Caco-2 (cell line): ENCODE measurements at regions of chr6 and their contacts with region 1.

Region 1: DNA sequence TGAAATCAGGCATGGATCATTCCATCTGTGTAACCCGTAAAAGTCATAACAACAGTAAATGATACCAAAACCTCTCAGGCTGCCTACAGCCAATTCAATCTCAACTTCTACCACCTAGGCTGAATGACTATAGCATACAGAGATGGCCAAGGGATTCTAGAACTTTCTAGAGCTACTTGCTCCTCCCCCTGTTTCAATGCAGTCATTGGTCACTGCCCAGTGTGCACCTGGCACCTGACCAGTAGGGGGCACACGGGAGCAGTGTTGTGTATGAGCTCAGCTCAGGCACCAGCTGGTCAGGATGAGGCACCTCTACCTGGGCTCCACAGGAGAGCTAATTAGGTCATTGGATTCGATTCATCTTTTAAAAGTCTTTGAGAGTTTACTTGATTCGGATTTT is 86.2 kb downstream of the PLEKHG1 start:
- DNase-seq: peak; percentile 77 to 85
- H3K4me3 ChIP-seq: no peak overlapping the region
- H3K4me3 Mint-ChIP-seq: peak overlapping the region; percentile 75
- H3K27ac Mint-ChIP-seq: peak overlapping the region; percentile 79
- H3K4me1 ChIP-seq: peaks cover 31% of the 10 kb centered on the region
- H3K4me1 Mint-ChIP-seq: peaks cover 20% of the 10 kb centered on the region
- H3K27me3 ChIP-seq: no peaks in the 10 kb centered on the region
- H3K27me3 Mint-ChIP-seq: no peaks in the 10 kb centered on the region
- CTCF ChIP-seq: peak; percentile 68 to 87

Region 2: DNA sequence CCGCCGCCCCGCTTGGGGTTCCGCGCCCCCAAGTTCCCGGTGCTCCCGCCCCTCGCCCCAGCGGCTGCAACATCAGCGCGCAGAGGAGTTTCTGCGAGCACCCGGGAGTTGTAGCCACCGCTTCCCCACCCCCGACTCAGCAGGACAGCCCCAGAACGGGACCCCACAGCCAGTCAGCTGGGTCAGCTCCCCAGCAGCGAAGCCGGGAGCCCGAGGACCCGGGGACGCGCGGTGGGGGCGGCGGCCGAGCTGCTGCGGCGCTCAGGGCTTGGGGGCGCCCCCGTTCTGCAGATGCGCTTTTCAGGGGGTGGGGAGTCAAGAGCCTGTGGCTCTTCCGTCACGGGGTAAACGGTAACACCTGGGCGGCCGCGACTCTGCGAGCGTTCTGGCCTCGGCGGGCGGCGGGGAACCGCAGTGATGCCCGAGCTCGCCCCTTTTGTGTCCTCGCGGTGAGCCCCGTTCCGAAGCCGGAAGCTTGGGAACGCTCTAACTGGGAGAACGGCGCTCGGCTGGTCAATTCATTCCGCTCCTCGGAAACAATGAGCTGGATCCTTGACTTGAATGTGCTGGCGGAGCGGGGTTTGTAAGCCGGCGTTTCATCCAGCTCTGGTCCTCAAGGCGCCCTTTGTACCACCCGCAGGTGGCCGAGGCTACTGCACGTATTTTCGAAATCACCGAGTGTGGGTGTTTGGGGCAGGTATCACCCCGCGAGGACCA is 85.4 kb before region 1 on chr6:
- CTCF ChIA-PET with region 1: interaction called, 6 read pairs
- POLR2A ChIA-PET with region 1: no interaction called
- intact Hi-C with region 1: loop called (anchors 1 kb)
- DNase-seq: peak; percentile 84 to 85
- H3K4me3 ChIP-seq: peak overlapping the region; percentile 61
- H3K4me3 Mint-ChIP-seq: peak overlapping the region; percentile 88
- H3K27ac Mint-ChIP-seq: peak overlapping the region; percentile 64
- H3K4me1 ChIP-seq: peaks cover 11% of the 10 kb centered on the region; the same call in 1 of the 2 replicates
- H3K4me1 Mint-ChIP-seq: peaks cover 18% of the 10 kb centered on the region
- H3K27me3 ChIP-seq: no peaks in the 10 kb centered on the region
- H3K27me3 Mint-ChIP-seq: no peaks in the 10 kb centered on the region
- CTCF ChIP-seq: peak; percentile 68 to 73

Region 3: GRCh38 chr6:150667977-150668716 is 17.7 kb before region 1 on chr6:
- CTCF ChIA-PET with region 1: interaction called, 15 read pairs
- POLR2A ChIA-PET with region 1: interaction called, 5 read pairs
- intact Hi-C with region 1: loop called (anchors 1 kb)
- DNase-seq: peak; percentile 87 to 88
- H3K4me3 ChIP-seq: no peak overlapping the region
- H3K4me3 Mint-ChIP-seq: peak overlapping the region; percentile 29
- H3K27ac Mint-ChIP-seq: peak overlapping the region; percentile 95
- H3K4me1 ChIP-seq: peaks cover 22% of the 10 kb centered on the region
- H3K4me1 Mint-ChIP-seq: peaks cover 6% of the 10 kb centered on the region
- H3K27me3 ChIP-seq: no peaks in the 10 kb centered on the region
- H3K27me3 Mint-ChIP-seq: no peaks in the 10 kb centered on the region
- CTCF ChIP-seq: no peak

Region 4: GRCh38 chr6:150720774-150721233 is 34.9 kb after region 1 on chr6:
- CTCF ChIA-PET with region 1: interaction called, 6 read pairs
- POLR2A ChIA-PET with region 1: interaction called, 4 read pairs
- intact Hi-C with region 1: loop called (anchors 1 kb)
- DNase-seq: peak; percentile 71 to 76
- H3K4me3 ChIP-seq: peak overlapping the region; percentile 12; the same call in 1 of the 2 replicates
- H3K4me3 Mint-ChIP-seq: peak overlapping the region; percentile 74
- H3K27ac Mint-ChIP-seq: peak overlapping the region; percentile 94
- H3K4me1 ChIP-seq: peaks cover 30% of the 10 kb centered on the region
- H3K4me1 Mint-ChIP-seq: peaks cover 39% of the 10 kb centered on the region
- H3K27me3 ChIP-seq: no peaks in the 10 kb centered on the region
- H3K27me3 Mint-ChIP-seq: no peaks in the 10 kb centered on the region
- CTCF ChIP-seq: peak; percentile 28 to 40

Region 5: DNA sequence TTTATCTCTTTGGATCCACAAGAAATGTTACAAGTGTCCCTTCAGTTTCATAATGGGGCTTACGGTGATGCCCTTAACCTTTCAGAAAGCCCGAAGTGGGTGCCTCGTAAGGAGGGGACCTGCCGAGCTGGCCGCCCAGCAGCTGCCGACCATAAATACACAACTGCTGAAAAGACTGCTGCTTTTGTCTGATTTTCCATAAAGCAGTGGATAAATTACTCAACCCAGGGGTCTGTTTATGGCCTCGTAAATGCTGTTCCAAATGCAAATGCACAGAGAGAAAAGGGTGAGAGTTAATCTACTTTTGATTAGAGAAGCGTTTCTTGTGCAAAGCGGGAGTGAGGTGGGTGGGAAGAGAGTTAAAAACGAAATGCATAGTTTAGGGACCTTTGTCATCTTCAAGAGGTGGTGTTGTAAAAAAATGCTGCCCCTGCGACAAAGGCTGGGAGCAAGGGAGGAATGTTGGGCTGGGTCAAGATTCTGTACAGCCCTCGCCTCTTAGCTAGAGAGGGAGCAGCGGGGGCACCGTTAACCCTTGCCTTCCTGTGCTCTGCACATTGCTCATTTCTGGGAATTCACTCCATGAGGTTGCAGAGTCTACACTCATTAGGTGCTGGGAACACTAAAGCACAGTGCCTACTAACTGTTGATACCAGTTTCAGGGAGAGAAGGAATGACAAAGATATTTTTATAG is 67.7 kb after region 1 on chr6:
- CTCF ChIA-PET with region 1: interaction called, 3 read pairs
- POLR2A ChIA-PET with region 1: no interaction called
- intact Hi-C with region 1: loop called (anchors 2 kb)
- DNase-seq: peak; percentile 60 to 69
- H3K4me3 ChIP-seq: peak overlapping the region; percentile 32
- H3K4me3 Mint-ChIP-seq: peak overlapping the region; percentile 73
- H3K27ac Mint-ChIP-seq: peak overlapping the region; percentile 86
- H3K4me1 ChIP-seq: peaks cover 22% of the 10 kb centered on the region
- H3K4me1 Mint-ChIP-seq: peaks cover 18% of the 10 kb centered on the region
- H3K27me3 ChIP-seq: no peaks in the 10 kb centered on the region
- H3K27me3 Mint-ChIP-seq: no peaks in the 10 kb centered on the region
- CTCF ChIP-seq: no peak